ENCODE measurements at regions of chr4 and their contacts with region 1.

Region 1: GRCh38 chr4:88533937-88534750 is 10.6 kb upstream of the PYURF start:
- DNase-seq: peak; percentile 83
- H3K4me3 ChIP-seq: peak overlapping the region in 1 of 3 experiments; percentile 35
- H3K27ac ChIP-seq: peak overlapping the region; percentile 98
- H3K4me1 ChIP-seq: peaks cover 38% of the 10 kb centered on the region
- H3K27me3 ChIP-seq: no peaks in the 10 kb centered on the region
- CTCF ChIP-seq: no peak
- POLR2A ChIP-seq: no peak

Region 2: GRCh38 chr4:88573995-88574394 is 39.9 kb after region 1 on chr4:
- CTCF ChIA-PET with region 1: interaction called, 13 read pairs
- POLR2A ChIA-PET with region 1: no interaction called
- dilution Hi-C with region 1: no loop called
- intact Hi-C with region 1: no loop called
- DNase-seq: no peak
- H3K4me3 ChIP-seq: no peak overlapping the region
- H3K27ac ChIP-seq: no peak overlapping the region
- H3K4me1 ChIP-seq: no peaks in the 10 kb centered on the region
- H3K27me3 ChIP-seq: no peaks in the 10 kb centered on the region
- CTCF ChIP-seq: peak in 1 of 2 donors; percentile 11
- POLR2A ChIP-seq: no peak

Region 3: GRCh38 chr4:88613417-88613875 is 79.3 kb after region 1 on chr4:
- CTCF ChIA-PET with region 1: interaction called, 15 read pairs
- POLR2A ChIA-PET with region 1: no interaction called
- dilution Hi-C with region 1: no loop called
- intact Hi-C with region 1: loop called (anchors 1 kb)
- DNase-seq: peak; percentile 78
- H3K4me3 ChIP-seq: peak overlapping the region in 1 of 3 experiments; percentile 12
- H3K27ac ChIP-seq: peak overlapping the region; percentile 85
- H3K4me1 ChIP-seq: peaks cover 52% of the 10 kb centered on the region
- H3K27me3 ChIP-seq: no peaks in the 10 kb centered on the region
- CTCF ChIP-seq: no peak
- POLR2A ChIP-seq: no peak

Region 4: GRCh38 chr4:88659055-88659889 is 125.1 kb after region 1 on chr4:
- CTCF ChIA-PET with region 1: interaction called, 368 read pairs
- POLR2A ChIA-PET with region 1: no interaction called
- dilution Hi-C with region 1: no loop called
- intact Hi-C with region 1: loop called (anchors 1 kb)
- DNase-seq: peak; percentile 83
- H3K4me3 ChIP-seq: no peak overlapping the region
- H3K27ac ChIP-seq: no peak overlapping the region
- H3K4me1 ChIP-seq: peaks cover 20% of the 10 kb centered on the region
- H3K27me3 ChIP-seq: no peaks in the 10 kb centered on the region
- CTCF ChIP-seq: peak; percentile 77 to 80
- POLR2A ChIP-seq: no peak

Region 5: DNA sequence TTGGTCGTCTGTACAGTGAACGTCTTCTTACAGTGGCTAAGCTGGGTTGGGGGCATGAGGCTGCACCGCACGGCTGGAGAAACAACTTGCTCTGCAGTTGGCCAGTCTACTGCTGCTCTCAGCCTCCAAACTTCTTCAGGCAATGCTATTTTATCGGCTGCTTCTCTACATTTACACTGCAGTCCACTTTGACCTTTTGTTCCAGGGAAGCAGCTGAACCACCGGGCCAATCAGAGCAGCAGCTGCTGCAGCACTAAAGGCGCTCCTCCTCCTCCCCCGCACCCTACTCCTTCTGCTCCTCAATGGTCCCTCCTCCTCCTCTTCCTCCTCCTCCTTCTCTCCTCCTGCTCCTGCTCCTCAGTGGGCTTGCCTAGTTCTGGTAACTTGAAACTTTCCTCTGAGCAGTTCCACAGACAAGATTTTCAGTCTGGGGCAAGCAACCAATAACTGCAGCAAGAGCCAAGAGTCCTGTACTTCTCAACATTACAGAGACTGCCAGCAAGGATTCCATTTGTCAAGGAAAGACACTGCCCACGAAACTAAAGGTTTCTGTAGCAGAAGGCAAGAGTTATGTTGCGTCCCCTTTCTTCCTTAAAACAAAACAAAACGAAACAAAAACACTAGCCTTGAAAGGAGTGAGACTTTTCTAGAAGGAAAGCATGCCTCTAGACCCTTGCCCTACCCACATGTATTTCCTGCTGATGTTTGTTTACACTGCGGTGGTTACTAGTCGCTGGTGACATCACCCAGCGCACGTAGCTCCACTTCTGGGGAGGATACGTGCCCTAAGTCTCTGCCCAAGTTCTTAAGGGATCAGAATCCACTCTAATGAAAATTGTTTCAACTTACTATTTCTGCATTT is 289.1 kb after region 1 on chr4:
- CTCF ChIA-PET with region 1: interaction called, 8 read pairs
- POLR2A ChIA-PET with region 1: no interaction called
- dilution Hi-C with region 1: no loop called
- intact Hi-C with region 1: loop called (anchors 5 kb)
- DNase-seq: peak; percentile 92
- H3K4me3 ChIP-seq: peak overlapping the region; percentile 12 to 61 (median 39)
- H3K27ac ChIP-seq: peak overlapping the region; percentile 81
- H3K4me1 ChIP-seq: peaks cover 17% of the 10 kb centered on the region
- H3K27me3 ChIP-seq: no peaks in the 10 kb centered on the region
- CTCF ChIP-seq: no peak
- POLR2A ChIP-seq: peak; percentile 64